ENCODE measurements at regions of chr5 and their contacts with region 1.

Region 1: GRCh38 chr5:150217873-150218692 is 28.2 kb downstream of the SLC6A7 start:
- DNase-seq: peak; percentile 51 to 84
- H3K4me3 ChIP-seq: no peak overlapping the region
- H3K27ac ChIP-seq: no peak overlapping the region
- H3K4me1 ChIP-seq: 0 out of 2 replicates have a peak, but pooled peaks cover 7% of the 10 kb centered on the region
- H3K27me3 ChIP-seq: no peaks in the 10 kb centered on the region
- CTCF ChIP-seq: peak; percentile 96

Region 2: GRCh38 chr5:150044329-150044681 is 173.8 kb before region 1 on chr5:
- CTCF ChIA-PET with region 1: no interaction called
- POLR2A ChIA-PET with region 1: no interaction called
- intact Hi-C with region 1: loop called (anchors 10 kb)
- DNase-seq: no peak
- H3K4me3 ChIP-seq: no peak overlapping the region
- H3K27ac ChIP-seq: no peak overlapping the region
- H3K4me1 ChIP-seq: no peaks in the 10 kb centered on the region
- H3K27me3 ChIP-seq: no peaks in the 10 kb centered on the region
- CTCF ChIP-seq: no peak

Region 3: DNA sequence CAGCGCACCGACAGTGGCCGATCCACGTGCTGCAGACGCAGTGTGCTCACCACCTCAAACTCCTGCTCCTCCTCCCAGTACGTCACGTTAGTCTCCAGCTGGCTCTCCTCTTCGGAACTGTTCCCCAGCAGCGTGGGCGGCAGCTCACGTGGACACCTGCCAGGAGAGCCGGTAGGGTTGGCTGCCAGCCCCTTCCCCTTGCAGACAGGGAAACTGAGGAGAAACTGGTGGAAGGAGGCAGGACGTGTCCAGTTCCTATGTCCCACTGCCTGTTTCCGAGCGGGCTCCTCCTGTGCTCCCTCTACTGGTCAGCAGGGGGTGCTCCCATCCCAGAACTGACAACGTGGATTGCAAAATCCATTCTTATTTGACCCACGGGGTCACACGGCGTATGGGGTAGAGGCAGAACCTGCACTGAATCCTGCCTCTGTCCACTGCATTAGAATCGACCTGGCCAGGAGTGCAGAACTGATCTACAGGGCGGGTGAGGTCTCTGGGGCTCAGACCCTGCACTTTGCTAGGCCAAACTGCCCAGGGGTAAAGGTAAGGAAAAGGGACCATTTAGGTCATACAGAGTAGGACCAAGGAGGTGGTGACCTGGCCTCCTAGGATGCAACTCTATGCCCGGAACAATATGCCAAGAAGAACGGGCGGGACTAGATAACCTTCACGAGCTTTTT is 88.1 kb before region 1 on chr5:
- CTCF ChIA-PET with region 1: interaction called, 9 read pairs
- POLR2A ChIA-PET with region 1: no interaction called
- intact Hi-C with region 1: loop called (anchors 1 kb)
- DNase-seq: peak; percentile 50 to 72
- H3K4me3 ChIP-seq: peak overlapping the region; percentile 42; the same call in 1 of the 2 replicates
- H3K27ac ChIP-seq: no peak overlapping the region
- H3K4me1 ChIP-seq: no peaks in the 10 kb centered on the region
- H3K27me3 ChIP-seq: no peaks in the 10 kb centered on the region; the same call in 1 of the 2 replicates
- CTCF ChIP-seq: peak; percentile 94

Region 4: GRCh38 chr5:150161242-150162141 is 56.6 kb before region 1 on chr5:
- CTCF ChIA-PET with region 1: interaction called, 3 read pairs
- POLR2A ChIA-PET with region 1: no interaction called
- intact Hi-C with region 1: loop called (anchors 1 kb)
- DNase-seq: peak; percentile 51 to 91
- H3K4me3 ChIP-seq: peak overlapping the region; percentile 18; the same call in 1 of the 2 replicates
- H3K27ac ChIP-seq: no peak overlapping the region
- H3K4me1 ChIP-seq: no peaks in the 10 kb centered on the region; the same call in 1 of the 2 replicates
- H3K27me3 ChIP-seq: no peaks in the 10 kb centered on the region
- CTCF ChIP-seq: peak; percentile 96

Region 5: DNA sequence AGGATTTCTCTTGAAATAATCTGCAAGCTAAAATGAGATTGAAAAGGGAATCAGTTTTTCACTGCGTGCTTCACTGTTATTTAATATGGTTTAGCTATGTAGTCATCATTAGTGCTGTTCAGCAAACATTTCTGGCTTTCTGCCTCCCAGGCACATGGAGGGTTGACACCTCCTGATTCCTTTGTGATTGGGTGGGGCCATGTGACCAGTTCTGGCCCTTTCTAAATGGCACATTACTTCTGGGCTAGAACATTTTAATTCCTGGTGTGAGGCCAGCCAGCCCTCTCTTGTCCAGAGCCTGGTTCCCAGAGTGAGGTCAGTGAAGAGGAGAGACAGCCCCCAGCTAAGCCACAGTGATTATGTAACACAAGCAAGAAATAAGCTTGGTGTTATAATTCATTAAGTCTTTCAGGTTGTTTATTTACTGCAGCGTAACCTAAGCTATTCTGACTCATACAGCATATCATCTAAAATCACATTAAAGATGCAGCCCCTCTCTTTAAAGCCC is 102.0 kb after region 1 on chr5:
- CTCF ChIA-PET with region 1: no interaction called
- POLR2A ChIA-PET with region 1: interaction called, 17 read pairs
- intact Hi-C with region 1: no loop called
- DNase-seq: peak; percentile 89 to 99
- H3K4me3 ChIP-seq: no peak overlapping the region
- H3K27ac ChIP-seq: peak overlapping the region; percentile 81
- H3K4me1 ChIP-seq: peaks cover 70% of the 10 kb centered on the region
- H3K27me3 ChIP-seq: no peaks in the 10 kb centered on the region
- CTCF ChIP-seq: no peak

Region 6: GRCh38 chr5:150428106-150428876 is 210.2 kb after region 1 on chr5:
- CTCF ChIA-PET with region 1: no interaction called
- POLR2A ChIA-PET with region 1: no interaction called
- intact Hi-C with region 1: no loop called
- DNase-seq: no peak
- H3K4me3 ChIP-seq: no peak overlapping the region
- H3K27ac ChIP-seq: no peak overlapping the region
- H3K4me1 ChIP-seq: no peaks in the 10 kb centered on the region
- H3K27me3 ChIP-seq: no peaks in the 10 kb centered on the region
- CTCF ChIP-seq: no peak